Cardiac septum (tissue), 1 donor: ENCODE measurements at regions of chr13 and their contacts with region 1.

Region 1: DNA sequence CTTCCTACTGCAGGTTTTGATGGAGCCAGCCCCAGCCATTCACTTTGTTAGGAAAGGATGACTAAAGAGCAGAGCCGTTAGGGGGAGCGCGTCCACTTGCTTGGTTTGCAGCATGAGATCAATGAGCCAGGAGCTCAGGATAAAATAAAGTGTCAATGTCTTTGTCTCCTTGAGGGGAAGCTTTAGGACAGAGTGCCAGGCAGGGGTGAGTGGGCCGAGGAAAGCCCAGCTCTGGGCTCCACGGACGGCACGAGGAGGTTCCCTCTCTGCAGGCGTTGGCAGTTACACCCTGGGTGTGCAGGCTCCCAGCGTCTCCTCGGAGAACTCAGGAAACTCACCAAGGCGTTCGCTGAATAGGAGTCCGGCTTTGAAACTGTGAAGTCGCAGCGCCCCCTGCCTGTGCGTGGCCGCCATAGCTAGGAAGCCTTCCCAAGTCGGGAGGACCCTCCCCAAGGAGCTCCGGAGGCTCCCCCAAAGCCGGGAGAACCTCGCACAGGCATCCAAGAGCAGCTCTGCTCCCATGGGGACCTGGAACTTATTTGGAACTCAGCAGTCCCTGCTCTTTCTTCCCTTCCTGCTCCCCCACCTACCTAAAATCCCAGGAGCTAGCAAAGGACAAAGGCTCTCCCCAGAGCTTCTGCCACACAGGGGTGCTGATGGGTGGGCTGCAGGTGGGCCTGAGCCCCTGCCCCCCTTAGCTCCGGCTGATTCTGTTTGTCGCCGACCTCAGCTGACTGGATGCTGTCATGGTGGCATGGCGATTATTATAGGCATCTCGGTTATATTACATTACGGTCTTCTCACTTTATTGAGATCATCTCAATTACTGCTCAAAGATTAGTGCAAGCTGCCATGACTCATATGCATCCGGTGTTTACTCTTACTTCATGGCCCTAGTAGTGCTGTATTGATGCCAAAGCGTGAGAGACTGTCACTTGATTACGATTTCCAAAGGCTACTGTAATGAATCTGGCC is 34.4 kb downstream of the GSX1 start:
- DNase-seq: peak; percentile 85

Region 2: DNA sequence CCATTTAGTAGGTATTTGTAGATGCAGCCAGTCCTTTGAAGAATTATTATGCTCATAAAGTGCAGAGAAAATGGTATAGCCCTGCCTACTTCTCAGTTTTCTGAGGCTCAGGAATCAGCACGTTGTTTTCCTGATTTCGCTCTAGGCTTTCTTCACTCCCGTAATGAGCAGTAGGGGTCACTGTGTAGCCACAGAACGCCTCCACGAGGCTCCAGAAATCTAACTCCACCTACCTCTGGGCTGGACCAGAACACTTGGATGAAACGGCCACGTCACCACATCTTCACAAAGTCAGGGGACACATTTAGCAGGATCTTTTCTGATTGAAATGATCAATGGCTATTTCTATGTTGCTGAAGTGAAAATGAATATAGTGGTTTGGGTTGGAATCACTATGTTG is 452.0 kb before region 1 on chr13:
- intact Hi-C with region 1: loop called (anchors 2 kb)
- DNase-seq: no peak

Region 3: GRCh38 chr13:27665333-27665732 is 161.3 kb before region 1 on chr13:
- intact Hi-C with region 1: loop called (anchors 5 kb)
- DNase-seq: no peak

Region 4: GRCh38 chr13:27953676-27954405 is 127.2 kb after region 1 on chr13:
- intact Hi-C with region 1: loop called (anchors 10 kb)
- DNase-seq: no peak

Region 5: DNA sequence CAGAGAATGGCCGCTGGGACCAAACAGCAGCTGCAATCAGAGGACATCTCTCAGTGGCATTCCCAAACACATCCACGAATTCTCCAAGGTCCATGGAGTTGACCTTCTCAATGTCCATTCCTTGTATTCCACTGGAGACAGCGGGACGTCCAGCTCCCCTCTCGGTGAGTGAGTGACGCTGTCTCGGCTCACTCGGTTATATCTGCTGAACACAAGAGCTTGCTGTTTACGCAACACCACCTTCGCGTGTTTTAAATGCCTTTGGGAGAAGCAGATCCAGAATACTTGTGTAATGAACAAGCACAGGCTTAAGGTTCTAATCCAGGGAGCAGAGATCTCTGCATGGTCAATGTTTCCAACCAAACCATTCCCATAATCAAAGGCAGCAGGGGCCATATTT is 161.9 kb after region 1 on chr13 and contains the start of gene URAD:
- intact Hi-C with region 1: loop called (anchors 2 kb)
- DNase-seq: no peak
- total RNA-seq, gene URAD: not detected